GM10248 (cell line): ENCODE measurements at regions of chr5 and their contacts with region 1.

Region 1: DNA sequence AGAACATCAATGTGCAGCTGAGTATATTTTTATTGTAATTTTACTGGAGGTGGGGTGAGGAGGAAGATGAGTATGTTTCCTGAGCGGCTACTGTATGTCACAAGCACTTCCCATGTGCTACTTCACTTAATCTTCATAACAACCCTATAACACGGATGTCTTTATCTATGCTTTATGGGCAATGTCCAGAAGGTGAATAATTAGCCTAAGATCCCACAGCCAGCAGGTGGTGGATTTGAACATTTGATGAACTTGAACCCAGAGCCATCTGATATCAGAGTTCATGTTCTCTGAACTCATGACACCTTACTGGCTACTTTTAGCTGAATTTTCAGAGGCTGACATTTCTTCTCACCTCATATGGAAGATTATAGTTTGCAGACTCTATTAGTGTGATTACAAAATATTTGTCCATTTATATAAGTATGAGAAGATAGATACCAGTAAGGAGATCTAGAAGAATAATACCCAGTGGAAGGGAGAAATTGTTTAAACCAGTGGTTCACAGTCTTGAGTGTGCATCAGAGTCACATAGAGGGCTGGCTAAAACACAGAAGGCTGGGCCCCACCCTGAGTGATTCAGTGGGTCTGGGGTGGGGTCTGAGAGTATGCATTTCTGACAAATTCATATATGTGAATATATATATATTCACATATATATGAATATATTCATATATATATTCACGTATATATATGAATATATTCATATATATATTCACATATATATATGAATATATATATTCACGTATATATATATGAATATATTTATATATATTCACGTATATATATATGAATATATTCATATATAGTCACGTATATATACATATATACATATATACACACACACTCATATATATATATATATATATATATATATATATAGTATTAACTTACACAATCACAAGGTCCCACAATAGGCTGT is 164.4 kb upstream of the NR3C1 start:
- DNase-seq: no peak
- CTCF ChIP-seq: no peak

Region 2: GRCh38 chr5:143582869-143583268 is 15.0 kb after region 1 on chr5:
- CTCF ChIA-PET with region 1: interaction called, 10 read pairs
- POLR2A ChIA-PET with region 1: no interaction called
- DNase-seq: no peak
- CTCF ChIP-seq: no peak

Region 3: DNA sequence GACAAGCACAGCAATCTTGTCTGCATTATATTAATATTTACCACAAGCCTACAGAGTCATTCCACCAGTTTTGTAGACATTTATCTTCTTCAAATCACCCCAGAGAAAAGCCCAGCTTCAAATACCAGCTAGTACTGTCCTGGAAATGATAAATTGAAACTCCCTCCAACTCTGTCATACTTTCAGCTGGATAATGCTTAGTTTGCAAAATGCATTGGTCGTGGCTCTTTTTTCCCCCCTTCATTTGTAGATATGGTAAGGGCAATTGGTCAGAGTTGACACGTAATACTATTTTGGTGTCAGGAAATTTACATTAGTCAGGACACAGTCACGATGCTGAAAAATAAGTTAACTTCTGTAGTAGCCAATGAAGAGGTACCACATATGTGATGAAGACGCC is 265.3 kb after region 1 on chr5:
- CTCF ChIA-PET with region 1: no interaction called
- POLR2A ChIA-PET with region 1: no interaction called
- DNase-seq: no peak
- CTCF ChIP-seq: no peak